ENCODE measurements at regions of chr2 and their contacts with region 1.

Region 1: GRCh38 chr2:19901442-19902215 is at the start of gene TTC32:
- DNase-seq: peak; percentile 95
- H3K4me3 Mint-ChIP-seq: peak within 1 kb of the TSS; percentile 83
- H3K27ac Mint-ChIP-seq: peak within 1 kb of the TSS; percentile 93
- H3K4me1 Mint-ChIP-seq: peaks cover 38% of the 10 kb centered on the region
- H3K27me3 Mint-ChIP-seq: peaks cover 2% of the 10 kb centered on the region
- total RNA-seq, gene TTC32: 14.2 to 17.3 TPM

Region 2: GRCh38 chr2:19559596-19560240 is 341.9 kb before region 1 on chr2:
- CTCF ChIA-PET with region 1: no interaction called
- POLR2A ChIA-PET with region 1: no interaction called
- intact Hi-C with region 1: no loop called
- DNase-seq: no peak
- H3K4me3 Mint-ChIP-seq: no peak overlapping the region
- H3K27ac Mint-ChIP-seq: no peak overlapping the region
- H3K4me1 Mint-ChIP-seq: peaks cover 5% of the 10 kb centered on the region
- H3K27me3 Mint-ChIP-seq: peaks cover 3% of the 10 kb centered on the region

Region 3: GRCh38 chr2:19868705-19869580 is 32.7 kb before region 1 on chr2:
- CTCF ChIA-PET with region 1: interaction called, 3 read pairs
- POLR2A ChIA-PET with region 1: interaction called, 4 read pairs
- intact Hi-C with region 1: loop called (anchors 2 kb)
- DNase-seq: peak; percentile 70
- H3K4me3 Mint-ChIP-seq: peak overlapping the region; percentile 84
- H3K27ac Mint-ChIP-seq: peak overlapping the region; percentile 75
- H3K4me1 Mint-ChIP-seq: peaks cover 21% of the 10 kb centered on the region
- H3K27me3 Mint-ChIP-seq: no peaks in the 10 kb centered on the region

Region 4: DNA sequence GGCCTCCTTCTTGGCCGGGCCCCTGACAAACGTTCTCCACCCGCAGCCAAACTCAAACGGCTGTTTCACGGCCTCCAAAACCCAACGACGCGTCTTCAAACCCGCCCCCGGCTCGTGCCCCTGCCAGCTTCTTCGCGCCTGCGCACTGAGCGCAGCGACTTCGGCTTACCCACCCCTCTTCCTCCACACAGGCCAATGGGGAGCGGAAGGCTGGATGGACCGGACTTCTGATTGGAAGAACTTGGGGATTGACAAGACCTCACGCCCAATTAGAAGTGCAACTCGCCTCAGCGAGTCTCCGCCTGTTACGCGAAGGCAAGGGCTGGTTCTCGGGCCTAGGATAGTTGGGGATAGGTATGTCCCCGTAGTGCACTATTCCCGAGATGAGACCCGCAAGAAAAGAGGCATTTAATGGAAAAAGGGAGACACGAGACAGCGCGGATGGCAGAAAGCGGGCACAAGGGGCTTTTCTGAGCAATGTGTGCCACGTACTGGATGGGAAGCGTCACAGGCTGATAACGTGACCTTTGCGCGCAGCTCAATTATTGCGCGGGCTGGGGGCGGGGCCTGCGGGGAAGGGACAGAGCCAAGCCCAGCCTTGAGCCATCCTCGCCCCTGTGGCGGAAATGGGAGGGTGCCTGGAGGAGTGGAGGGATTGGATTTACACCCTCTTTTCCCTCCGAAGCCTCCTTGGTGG is 150.1 kb after region 1 on chr2 and contains the start of gene LAPTM4A:
- CTCF ChIA-PET with region 1: no interaction called
- POLR2A ChIA-PET with region 1: interaction called, 5 read pairs
- intact Hi-C with region 1: loop called (anchors 1 kb)
- DNase-seq: peak; percentile 99
- H3K4me3 Mint-ChIP-seq: no peak within 1 kb of the TSS
- H3K27ac Mint-ChIP-seq: no peak within 1 kb of the TSS
- H3K4me1 Mint-ChIP-seq: peaks cover 28% of the 10 kb centered on the region
- H3K27me3 Mint-ChIP-seq: peaks cover 11% of the 10 kb centered on the region
- total RNA-seq, gene LAPTM4A: 26.7 to 29.0 TPM

Region 5: GRCh38 chr2:20350753-20351554 is 449.3 kb after region 1 on chr2 and contains the start of gene PUM2:
- CTCF ChIA-PET with region 1: no interaction called
- POLR2A ChIA-PET with region 1: no interaction called
- intact Hi-C with region 1: loop called (anchors 1 kb)
- DNase-seq: peak; percentile 97
- H3K4me3 Mint-ChIP-seq: no peak within 1 kb of the TSS
- H3K27ac Mint-ChIP-seq: peak within 1 kb of the TSS; percentile 93
- H3K4me1 Mint-ChIP-seq: peaks cover 31% of the 10 kb centered on the region
- H3K27me3 Mint-ChIP-seq: no peaks in the 10 kb centered on the region
- total RNA-seq, gene PUM2: 122 TPM

Region 6: DNA sequence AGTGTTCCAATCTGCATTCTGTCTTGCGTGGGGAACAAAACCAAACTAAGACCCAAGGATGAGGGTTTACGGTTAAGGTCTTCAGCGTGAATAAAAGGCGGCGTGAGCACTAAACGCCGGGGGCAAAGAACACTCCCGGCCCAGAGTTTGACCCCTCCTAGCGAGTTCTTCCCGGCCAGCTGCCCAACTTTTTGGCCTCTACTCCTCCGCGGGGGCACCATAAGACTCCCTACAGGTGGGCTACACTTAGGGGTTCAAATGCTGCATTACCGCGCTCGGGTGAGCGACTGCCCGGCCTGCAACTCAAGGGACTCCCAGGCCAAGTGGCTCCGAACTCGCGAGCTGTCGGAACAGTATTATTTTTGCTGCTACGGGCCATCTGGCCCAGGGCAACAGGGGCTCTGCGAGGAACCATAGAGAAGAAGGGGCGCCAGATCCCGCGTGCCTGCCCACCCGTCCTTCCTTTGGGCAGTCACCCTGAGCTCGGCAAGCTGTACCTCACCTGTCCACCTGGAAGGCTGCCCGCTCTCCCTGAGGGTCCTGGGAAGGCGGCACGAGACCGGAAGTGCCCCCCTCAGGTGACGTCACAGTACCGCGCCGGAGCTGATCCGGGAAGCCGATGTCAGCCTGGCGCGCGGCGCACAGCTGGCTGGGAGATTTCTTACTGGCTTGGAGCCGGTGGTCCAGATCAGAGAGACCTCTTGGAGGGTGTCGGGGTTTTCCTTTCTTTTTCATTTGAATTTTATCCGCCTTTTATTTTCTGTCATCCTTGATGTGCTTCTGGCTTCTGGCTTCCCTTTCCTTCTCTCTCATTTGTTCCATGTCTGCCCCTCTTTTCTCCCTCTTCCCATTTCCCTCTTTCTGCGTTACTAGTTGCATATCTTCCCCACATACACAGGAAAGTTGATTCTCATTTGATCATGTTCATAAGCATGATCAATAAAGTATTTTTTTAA is 921.2 kb after region 1 on chr2 and contains the start of gene LDAH:
- CTCF ChIA-PET with region 1: no interaction called
- POLR2A ChIA-PET with region 1: no interaction called
- intact Hi-C with region 1: loop called (anchors 2 kb)
- DNase-seq: peak; percentile 90
- H3K4me3 Mint-ChIP-seq: peak within 1 kb of the TSS; percentile 96
- H3K27ac Mint-ChIP-seq: peak within 1 kb of the TSS; percentile 99
- H3K4me1 Mint-ChIP-seq: peaks cover 32% of the 10 kb centered on the region
- H3K27me3 Mint-ChIP-seq: no peaks in the 10 kb centered on the region
- total RNA-seq, gene LDAH: 35.2 to 38.7 TPM